Naive thymus-derived CD4-positive, alpha-beta T cell (primary cell): ENCODE measurements at regions of chr10 and their contacts with region 1.

Region 1: GRCh38 chr10:91908337-91909116 is 759 bp downstream of the FGFBP3 start:
- DNase-seq: peak; percentile 51 to 79 (median 74)
- ATAC-seq: peak; percentile 91
- H3K4me3 ChIP-seq: peak overlapping the region; percentile 77
- H3K4me3 Mint-ChIP-seq: peak overlapping the region; percentile 85 to 96 (median 93)
- H3K27ac ChIP-seq: peak overlapping the region; percentile 65
- H3K27ac Mint-ChIP-seq: peak overlapping the region; percentile 73 to 92 (median 88)
- H3K4me1 ChIP-seq: peaks cover 0 to 10% of the 10 kb centered on the region in 2 donors
- H3K4me1 Mint-ChIP-seq: peaks cover 18 to 36% (median 28%) of the 10 kb centered on the region in 7 donors
- H3K27me3 ChIP-seq: no peaks in the 10 kb centered on the region
- H3K27me3 Mint-ChIP-seq: peaks cover 0 to 13% (median 0%) of the 10 kb centered on the region in 5 donors

Region 2: DNA sequence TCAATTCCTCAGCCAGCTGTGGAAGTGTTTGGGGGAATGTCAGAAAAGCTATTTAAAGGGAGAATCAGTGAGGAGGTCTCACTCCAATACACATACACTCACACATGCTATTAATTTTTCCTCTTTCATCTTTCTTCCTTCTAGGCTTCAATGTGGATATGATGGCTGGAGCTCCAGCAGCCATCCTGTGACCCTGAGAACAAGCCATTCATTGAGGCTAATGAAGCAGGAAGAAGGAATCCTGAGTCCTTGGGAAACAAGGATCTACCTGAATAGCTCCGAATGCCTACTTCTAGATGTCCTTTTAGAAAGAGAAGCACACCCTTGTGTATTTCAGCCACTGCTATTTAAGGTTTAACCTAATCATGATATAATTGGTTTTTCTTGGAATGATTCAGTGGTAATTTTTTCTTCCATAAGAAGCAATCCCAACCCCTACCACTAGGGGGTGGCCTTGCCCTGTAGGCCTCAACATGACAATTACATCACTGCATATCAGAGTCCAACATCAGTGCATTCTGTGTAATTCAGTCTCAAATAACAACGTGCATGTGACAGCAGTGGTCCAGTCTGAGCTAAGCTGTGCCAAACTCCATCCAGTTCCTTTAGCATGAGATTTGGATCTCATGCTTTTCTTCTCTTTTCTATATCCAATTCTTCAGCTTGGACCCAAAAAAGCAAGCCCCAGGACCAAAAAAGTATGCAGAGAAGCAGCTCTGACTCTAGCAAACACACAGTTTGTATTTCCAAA is 902.4 kb before region 1 on chr10:
- CTCF ChIA-PET with region 1: no interaction called
- POLR2A ChIA-PET with region 1: no interaction called
- intact Hi-C with region 1: loop called in 1 of 2 experiments (anchors 5 kb)
- DNase-seq: peak; percentile 37 to 78 (median 68)
- ATAC-seq: peak; percentile 95
- H3K4me3 ChIP-seq: peak overlapping the region; percentile 7
- H3K4me3 Mint-ChIP-seq: peak overlapping the region in 9 of 10 donors; percentile 31 to 76 (median 68)
- H3K27ac ChIP-seq: peak overlapping the region; percentile 21
- H3K27ac Mint-ChIP-seq: peak overlapping the region; percentile 37 to 86 (median 74)
- H3K4me1 ChIP-seq: peaks cover 7 to 19% of the 10 kb centered on the region in 2 donors
- H3K4me1 Mint-ChIP-seq: peaks cover 0 to 26% (median 21%) of the 10 kb centered on the region in 7 donors
- H3K27me3 ChIP-seq: no peaks in the 10 kb centered on the region
- H3K27me3 Mint-ChIP-seq: peaks cover 0 to 22% (median 0%) of the 10 kb centered on the region in 5 donors

Region 3: DNA sequence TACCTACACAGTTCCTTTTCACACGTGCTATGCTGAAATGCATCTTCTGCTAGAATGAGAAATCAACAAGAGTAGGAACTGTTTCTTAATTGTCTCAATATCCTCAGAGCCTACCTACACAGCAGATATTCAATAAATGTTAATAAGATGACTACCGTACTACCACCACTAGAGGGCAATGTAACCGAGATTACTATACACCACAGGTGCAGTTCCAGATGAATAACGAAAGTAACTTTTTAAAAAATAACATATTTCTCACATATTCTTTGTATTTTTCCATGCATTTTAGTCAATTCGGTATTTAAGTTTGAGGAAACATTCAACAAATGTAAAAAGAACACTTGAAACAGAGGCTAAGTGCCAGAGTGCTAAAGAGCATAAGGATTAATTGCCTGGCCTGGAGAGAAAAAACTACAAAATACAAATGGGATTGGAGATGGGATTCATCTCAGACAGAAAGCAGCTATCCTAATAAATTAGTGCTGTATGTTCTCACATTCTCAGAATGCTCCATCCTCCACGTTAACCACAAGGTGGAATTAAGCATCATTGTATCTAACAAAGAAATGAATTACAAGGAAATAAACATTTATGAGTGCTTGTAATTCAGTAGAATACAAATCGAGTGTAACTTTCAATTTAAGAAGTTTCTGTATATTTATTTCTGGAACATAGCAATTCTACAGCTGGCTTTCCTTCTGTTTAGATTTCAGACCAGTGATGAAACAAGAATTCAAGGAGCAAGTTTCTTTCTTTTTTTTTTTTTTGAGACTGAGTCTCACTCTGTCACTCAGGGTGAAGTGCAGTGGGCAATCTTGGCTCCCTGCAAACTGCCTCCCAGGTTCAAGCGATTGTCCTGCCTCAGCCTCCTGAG is 518.7 kb before region 1 on chr10:
- CTCF ChIA-PET with region 1: interaction called, 6 read pairs
- POLR2A ChIA-PET with region 1: no interaction called
- intact Hi-C with region 1: loop called (anchors 1 kb)
- DNase-seq: peak in 7 of 9 donors; percentile 51 to 76 (median 68)
- ATAC-seq: peak; percentile 98
- H3K4me3 ChIP-seq: no peak overlapping the region
- H3K4me3 Mint-ChIP-seq: peak overlapping the region in 6 of 10 donors; percentile 4 to 67 (median 38)
- H3K27ac ChIP-seq: no peak overlapping the region
- H3K27ac Mint-ChIP-seq: peak overlapping the region in 1 of 9 donors; percentile 30
- H3K4me1 ChIP-seq: no peaks in the 10 kb centered on the region
- H3K4me1 Mint-ChIP-seq: peaks cover 0 to 11% (median 6%) of the 10 kb centered on the region in 7 donors
- H3K27me3 ChIP-seq: no peaks in the 10 kb centered on the region
- H3K27me3 Mint-ChIP-seq: peaks cover 12 to 34% (median 20%) of the 10 kb centered on the region in 5 donors

Region 4: DNA sequence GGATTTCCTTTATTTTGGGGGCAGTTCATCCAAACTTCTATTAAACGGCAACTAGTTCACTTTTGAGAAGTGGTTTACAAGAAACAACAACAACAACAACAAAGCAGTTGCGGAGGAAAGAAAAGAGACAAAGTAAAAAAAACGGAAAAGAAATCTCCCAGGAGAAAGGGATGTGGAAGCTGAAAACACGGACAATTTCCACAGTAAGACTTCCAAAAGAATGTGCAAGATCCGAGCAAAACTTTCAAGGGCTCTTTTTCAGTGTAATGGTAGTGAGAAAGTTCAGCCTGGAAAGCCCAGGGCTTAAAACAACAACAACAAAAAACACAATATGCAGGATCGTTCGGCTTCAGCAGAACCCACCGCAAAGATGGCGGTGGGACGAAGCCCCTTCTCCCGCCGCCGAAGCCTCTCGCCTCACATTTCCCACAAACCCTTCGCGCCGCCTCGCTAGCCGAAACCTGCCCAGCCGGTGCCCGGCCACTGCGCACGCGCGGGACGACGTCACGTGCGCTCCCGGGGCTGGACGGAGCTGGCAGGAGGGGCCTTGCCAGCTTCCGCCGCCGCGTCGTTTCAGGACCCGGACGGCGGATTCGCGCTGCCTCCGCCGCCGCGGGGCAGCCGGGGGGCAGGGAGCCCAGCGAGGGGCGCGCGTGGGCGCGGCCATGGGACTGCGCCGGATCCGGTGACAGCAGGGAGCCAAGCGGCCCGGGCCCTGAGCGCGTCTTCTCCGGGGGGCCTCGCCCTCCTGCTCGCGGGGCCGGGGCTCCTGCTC is 110.5 kb before region 1 on chr10 and contains the start of gene TNKS2:
- CTCF ChIA-PET with region 1: interaction called, 9 read pairs
- POLR2A ChIA-PET with region 1: interaction called, 24 read pairs
- intact Hi-C with region 1: loop called (anchors 1 kb)
- DNase-seq: peak; percentile 86 to 97 (median 92)
- ATAC-seq: peak; percentile 87
- H3K4me3 ChIP-seq: peak within 1 kb of the TSS; percentile 87
- H3K4me3 Mint-ChIP-seq: peak within 1 kb of the TSS; percentile 95 to 100 (median 98)
- H3K27ac ChIP-seq: peak within 1 kb of the TSS; percentile 92
- H3K27ac Mint-ChIP-seq: peak within 1 kb of the TSS; percentile 92 to 100 (median 96)
- H3K4me1 ChIP-seq: peaks cover 26 to 37% of the 10 kb centered on the region in 2 donors
- H3K4me1 Mint-ChIP-seq: peaks cover 37 to 73% (median 69%) of the 10 kb centered on the region in 7 donors
- H3K27me3 ChIP-seq: no peaks in the 10 kb centered on the region
- H3K27me3 Mint-ChIP-seq: no peaks in the 10 kb centered on the region
- total RNA-seq, gene TNKS2: 35.0 to 57.3 (median 41.5) TPM

Region 5: GRCh38 chr10:91923371-91924211 is 15.1 kb after region 1 on chr10 and contains the start of gene BTAF1:
- CTCF ChIA-PET with region 1: interaction called, 23 read pairs
- POLR2A ChIA-PET with region 1: interaction called, 61 read pairs
- intact Hi-C with region 1: loop called (anchors 1 kb)
- DNase-seq: peak; percentile 86 to 93 (median 91)
- ATAC-seq: peak; percentile 97
- H3K4me3 ChIP-seq: peak within 1 kb of the TSS; percentile 70
- H3K4me3 Mint-ChIP-seq: peak within 1 kb of the TSS; percentile 91 to 100 (median 96)
- H3K27ac ChIP-seq: peak within 1 kb of the TSS; percentile 96
- H3K27ac Mint-ChIP-seq: peak within 1 kb of the TSS; percentile 97 to 99 (median 98)
- H3K4me1 ChIP-seq: peaks cover 9 to 25% of the 10 kb centered on the region in 2 donors
- H3K4me1 Mint-ChIP-seq: peaks cover 22 to 62% (median 45%) of the 10 kb centered on the region in 7 donors
- H3K27me3 ChIP-seq: no peaks in the 10 kb centered on the region
- H3K27me3 Mint-ChIP-seq: peaks cover under 1 to 8% (median 5%) of the 10 kb centered on the region in 5 donors
- total RNA-seq, gene BTAF1: 55.7 to 84.8 (median 78.5) TPM

Region 6: DNA sequence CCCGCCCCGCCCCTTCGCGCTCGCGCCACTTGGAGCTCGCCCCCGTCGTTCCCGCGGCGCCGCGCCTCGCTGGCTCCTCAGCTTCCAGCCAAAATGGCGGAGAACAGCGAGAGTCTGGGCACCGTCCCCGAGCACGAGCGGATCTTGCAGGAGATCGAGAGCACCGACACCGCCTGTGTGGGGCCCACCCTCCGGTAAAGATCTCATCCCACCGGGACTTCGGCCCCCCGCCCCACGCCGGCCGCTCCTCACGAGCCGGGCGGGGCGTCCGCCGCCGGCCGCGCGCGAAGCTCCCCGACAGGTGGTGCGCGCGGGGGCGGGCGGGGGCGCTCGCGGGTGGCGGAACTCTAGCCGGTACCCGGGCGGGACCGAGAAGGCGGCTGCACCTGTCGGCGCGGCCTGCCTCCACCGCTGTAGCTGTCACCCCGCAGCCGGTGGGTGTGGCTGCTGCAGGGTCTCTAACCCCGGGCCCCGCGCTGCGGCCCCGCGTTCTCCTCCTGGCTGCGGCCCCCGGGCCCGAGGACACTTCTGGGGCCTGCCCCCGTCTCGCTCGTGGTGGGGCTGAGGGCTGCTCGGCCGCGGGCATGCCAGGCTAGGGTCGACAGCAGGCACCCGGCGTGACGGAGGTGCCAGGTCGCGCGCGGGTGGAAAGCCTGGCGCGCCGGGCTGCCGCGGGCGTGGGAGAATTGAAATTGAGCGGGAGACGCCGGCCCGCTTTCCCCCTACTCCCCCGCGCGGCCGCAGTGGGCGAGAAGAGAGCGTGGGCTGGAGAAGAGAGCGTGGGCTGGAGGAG is 940.1 kb after region 1 on chr10 and contains the start of gene EXOC6:
- CTCF ChIA-PET with region 1: no interaction called
- POLR2A ChIA-PET with region 1: no interaction called
- intact Hi-C with region 1: loop called in 1 of 2 experiments (anchors 5 kb)
- DNase-seq: peak; percentile 78 to 93 (median 91)
- ATAC-seq: peak; percentile 91
- H3K4me3 ChIP-seq: peak within 1 kb of the TSS; percentile 70
- H3K4me3 Mint-ChIP-seq: peak within 1 kb of the TSS; percentile 81 to 94 (median 91)
- H3K27ac ChIP-seq: peak within 1 kb of the TSS; percentile 95
- H3K27ac Mint-ChIP-seq: peak within 1 kb of the TSS; percentile 56 to 95 (median 92)
- H3K4me1 ChIP-seq: peaks cover 7 to 19% of the 10 kb centered on the region in 2 donors
- H3K4me1 Mint-ChIP-seq: peaks cover 4 to 48% (median 36%) of the 10 kb centered on the region in 7 donors
- H3K27me3 ChIP-seq: no peaks in the 10 kb centered on the region
- H3K27me3 Mint-ChIP-seq: no peaks in the 10 kb centered on the region
- total RNA-seq, gene EXOC6: 8.1 to 12.1 (median 11.4) TPM